ENCODE measurements at regions of chr7 and their contacts with region 1.

Region 1: GRCh38 chr7:1065263-1066260 is 21.2 kb downstream of the GPR146 start:
- DNase-seq: peak; percentile 87
- H3K4me3 Mint-ChIP-seq: no peak overlapping the region
- H3K27ac Mint-ChIP-seq: no peak overlapping the region
- H3K4me1 Mint-ChIP-seq: peaks cover 6% of the 10 kb centered on the region
- H3K27me3 Mint-ChIP-seq: no peaks in the 10 kb centered on the region

Region 2: DNA sequence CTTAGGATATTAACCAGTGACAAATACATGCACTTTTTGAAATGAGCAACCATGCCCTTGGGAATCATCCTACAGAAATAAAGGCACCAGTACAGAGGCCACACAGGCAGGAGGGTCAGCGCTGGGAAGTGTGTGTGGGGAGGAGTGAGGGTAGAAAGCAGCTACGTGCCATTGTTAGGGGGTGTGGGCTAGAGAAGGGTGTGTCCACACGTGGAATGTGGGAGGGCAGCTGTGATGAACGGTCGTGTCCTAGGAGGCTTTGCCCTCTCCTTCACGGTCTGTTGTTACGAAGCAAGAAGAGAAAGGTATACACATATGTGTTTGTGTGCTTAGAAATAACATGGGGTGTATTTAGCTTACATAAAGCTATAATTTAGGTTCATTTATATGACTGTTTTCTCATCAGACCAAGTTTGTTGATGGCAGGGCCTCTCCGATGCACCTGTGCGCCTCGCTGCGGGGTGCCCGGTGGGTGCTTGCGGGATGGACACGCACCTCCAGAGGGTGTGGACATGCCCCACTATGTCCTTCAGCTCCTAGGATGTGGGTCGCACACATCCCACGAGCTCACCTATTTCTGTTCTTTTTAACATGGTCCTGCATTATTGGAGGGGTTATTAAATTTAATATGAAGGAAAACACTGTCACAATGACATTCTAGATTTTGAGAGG is 206.1 kb before region 1 on chr7:
- CTCF ChIA-PET with region 1: no interaction called
- intact Hi-C with region 1: no loop called
- DNase-seq: no peak
- H3K4me3 Mint-ChIP-seq: no peak overlapping the region
- H3K27ac Mint-ChIP-seq: no peak overlapping the region
- H3K4me1 Mint-ChIP-seq: no peaks in the 10 kb centered on the region
- H3K27me3 Mint-ChIP-seq: no peaks in the 10 kb centered on the region

Region 3: GRCh38 chr7:901381-902154 is 164.0 kb before region 1 on chr7:
- CTCF ChIA-PET with region 1: no interaction called
- intact Hi-C with region 1: loop called (anchors 10 kb)
- DNase-seq: peak; percentile 64
- H3K4me3 Mint-ChIP-seq: no peak overlapping the region
- H3K27ac Mint-ChIP-seq: no peak overlapping the region
- H3K4me1 Mint-ChIP-seq: no peaks in the 10 kb centered on the region
- H3K27me3 Mint-ChIP-seq: no peaks in the 10 kb centered on the region

Region 4: GRCh38 chr7:1020849-1021251 is 44.7 kb before region 1 on chr7:
- CTCF ChIA-PET with region 1: interaction called, 5 read pairs
- intact Hi-C with region 1: loop called (anchors 1 kb)
- DNase-seq: no peak
- H3K4me3 Mint-ChIP-seq: no peak overlapping the region
- H3K27ac Mint-ChIP-seq: no peak overlapping the region
- H3K4me1 Mint-ChIP-seq: peaks cover 8% of the 10 kb centered on the region
- H3K27me3 Mint-ChIP-seq: no peaks in the 10 kb centered on the region

Region 5: GRCh38 chr7:1028031-1028770 is 37.4 kb before region 1 on chr7:
- CTCF ChIA-PET with region 1: no interaction called
- intact Hi-C with region 1: loop called (anchors 2 kb)
- DNase-seq: peak; percentile 87
- H3K4me3 Mint-ChIP-seq: peak overlapping the region; percentile 67
- H3K27ac Mint-ChIP-seq: no peak overlapping the region
- H3K4me1 Mint-ChIP-seq: peaks cover 34% of the 10 kb centered on the region
- H3K27me3 Mint-ChIP-seq: no peaks in the 10 kb centered on the region

Region 6: DNA sequence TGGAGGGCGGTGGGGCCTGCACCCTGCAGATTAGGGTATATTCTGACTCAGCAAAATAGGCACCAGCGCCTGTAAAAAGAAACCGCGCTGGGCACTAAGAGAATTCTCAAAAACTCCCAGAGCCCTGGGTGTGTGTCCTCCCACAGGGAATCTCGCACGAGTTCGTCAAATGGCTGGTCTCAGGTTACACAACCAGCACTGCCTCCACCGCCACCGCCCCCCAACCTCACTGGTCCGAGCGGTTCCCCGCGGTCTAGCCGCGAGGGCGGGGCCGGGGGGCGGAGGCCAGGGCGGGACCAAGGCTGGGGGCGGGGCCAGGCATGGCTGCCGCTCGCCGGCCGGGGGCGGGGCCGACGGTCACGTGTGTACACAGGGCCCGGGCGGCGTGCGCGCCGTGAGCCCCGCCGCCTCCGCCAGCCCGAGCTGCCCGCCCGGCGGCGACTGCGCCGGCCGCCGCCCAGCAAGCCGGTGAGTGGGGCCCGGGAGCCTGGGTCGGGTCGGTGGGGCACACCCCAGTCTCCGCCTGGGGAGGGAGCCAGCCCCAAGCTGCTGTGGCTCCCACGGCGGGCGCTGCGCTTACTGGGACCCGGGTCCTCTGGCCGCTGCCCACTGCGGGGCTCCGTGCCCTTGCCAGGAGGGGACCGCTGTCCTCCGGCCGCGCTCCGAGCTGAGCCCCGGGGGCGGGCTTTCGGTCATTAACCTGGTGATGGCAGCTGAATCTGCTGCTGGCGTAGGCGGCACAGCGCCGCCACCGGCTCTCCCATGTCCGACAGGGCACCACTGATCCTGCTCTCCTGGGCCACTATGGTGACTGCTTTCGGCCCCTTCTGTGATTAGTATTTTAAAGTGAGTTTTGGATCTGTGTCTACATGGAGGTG is 21.1 kb before region 1 on chr7 and contains the start of gene GPR146:
- CTCF ChIA-PET with region 1: interaction called, 20 read pairs
- intact Hi-C with region 1: loop called (anchors 2 kb)
- DNase-seq: peak; percentile 93
- H3K4me3 Mint-ChIP-seq: peak within 1 kb of the TSS; percentile 69
- H3K27ac Mint-ChIP-seq: peak within 1 kb of the TSS; percentile 70
- H3K4me1 Mint-ChIP-seq: peaks cover 57% of the 10 kb centered on the region
- H3K27me3 Mint-ChIP-seq: no peaks in the 10 kb centered on the region
- total RNA-seq, gene GPR146: 0.57 to 0.62 TPM

Region 7: GRCh38 chr7:1053002-1053478 is 12.5 kb before region 1 on chr7:
- CTCF ChIA-PET with region 1: interaction called, 10 read pairs
- intact Hi-C with region 1: no loop called
- DNase-seq: no peak
- H3K4me3 Mint-ChIP-seq: no peak overlapping the region
- H3K27ac Mint-ChIP-seq: no peak overlapping the region
- H3K4me1 Mint-ChIP-seq: peaks cover 53% of the 10 kb centered on the region
- H3K27me3 Mint-ChIP-seq: no peaks in the 10 kb centered on the region

Region 8: DNA sequence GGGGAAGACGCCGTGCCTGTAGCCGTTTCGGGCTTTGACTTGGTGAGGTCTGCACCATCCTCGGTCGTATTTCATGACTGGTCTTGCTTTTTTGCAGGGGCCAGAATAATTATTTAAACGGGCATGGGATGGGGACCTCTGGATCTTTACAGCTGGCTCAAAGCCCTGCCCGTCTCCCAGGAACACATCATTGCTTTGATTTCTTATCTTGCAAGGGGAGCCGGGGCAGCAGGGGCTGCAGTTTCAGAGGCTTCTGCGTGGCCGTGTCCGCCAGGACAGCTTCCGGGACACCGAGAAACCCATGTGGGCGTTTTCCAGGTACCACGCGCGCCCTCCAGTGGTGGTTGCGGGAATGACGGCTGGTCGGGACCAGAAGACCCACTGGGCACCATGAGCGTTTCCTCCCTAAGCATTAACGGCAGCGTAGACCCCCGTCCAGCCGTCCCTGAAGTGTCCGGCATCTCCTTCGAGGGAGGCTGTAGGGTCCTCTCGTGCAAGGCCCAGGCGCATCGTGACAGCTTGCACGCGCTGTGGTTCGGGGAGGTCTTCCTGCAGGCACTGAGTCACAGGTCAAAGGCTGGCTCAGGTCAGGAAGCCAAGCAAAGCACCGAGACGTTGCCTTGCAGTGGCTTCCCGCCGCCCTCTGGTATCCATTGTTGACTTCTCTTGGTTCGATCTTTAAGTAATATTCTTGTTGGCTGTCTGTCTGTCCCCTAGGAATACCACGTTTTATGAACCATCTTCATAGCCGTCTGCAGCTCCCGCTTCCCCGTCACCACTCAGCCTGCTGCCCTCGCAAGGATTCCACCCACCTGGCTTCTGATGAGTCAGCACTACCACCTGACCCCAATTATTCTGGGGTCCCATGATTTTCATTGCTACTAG is 110.6 kb after region 1 on chr7:
- CTCF ChIA-PET with region 1: no interaction called
- intact Hi-C with region 1: loop called (anchors 2 kb)
- DNase-seq: peak; percentile 90
- H3K4me3 Mint-ChIP-seq: peak overlapping the region; percentile 60
- H3K27ac Mint-ChIP-seq: no peak overlapping the region
- H3K4me1 Mint-ChIP-seq: peaks cover 11% of the 10 kb centered on the region
- H3K27me3 Mint-ChIP-seq: peaks cover 10% of the 10 kb centered on the region

Measured in activated naive CD4-positive, alpha-beta T cell treated with anti-CD3 and anti-CD28 coated beads for 36 hours (primary cell).